Astrocyte of the cerebellum (primary cell): ENCODE measurements at regions of chr5 and their contacts with region 1.

Region 1: DNA sequence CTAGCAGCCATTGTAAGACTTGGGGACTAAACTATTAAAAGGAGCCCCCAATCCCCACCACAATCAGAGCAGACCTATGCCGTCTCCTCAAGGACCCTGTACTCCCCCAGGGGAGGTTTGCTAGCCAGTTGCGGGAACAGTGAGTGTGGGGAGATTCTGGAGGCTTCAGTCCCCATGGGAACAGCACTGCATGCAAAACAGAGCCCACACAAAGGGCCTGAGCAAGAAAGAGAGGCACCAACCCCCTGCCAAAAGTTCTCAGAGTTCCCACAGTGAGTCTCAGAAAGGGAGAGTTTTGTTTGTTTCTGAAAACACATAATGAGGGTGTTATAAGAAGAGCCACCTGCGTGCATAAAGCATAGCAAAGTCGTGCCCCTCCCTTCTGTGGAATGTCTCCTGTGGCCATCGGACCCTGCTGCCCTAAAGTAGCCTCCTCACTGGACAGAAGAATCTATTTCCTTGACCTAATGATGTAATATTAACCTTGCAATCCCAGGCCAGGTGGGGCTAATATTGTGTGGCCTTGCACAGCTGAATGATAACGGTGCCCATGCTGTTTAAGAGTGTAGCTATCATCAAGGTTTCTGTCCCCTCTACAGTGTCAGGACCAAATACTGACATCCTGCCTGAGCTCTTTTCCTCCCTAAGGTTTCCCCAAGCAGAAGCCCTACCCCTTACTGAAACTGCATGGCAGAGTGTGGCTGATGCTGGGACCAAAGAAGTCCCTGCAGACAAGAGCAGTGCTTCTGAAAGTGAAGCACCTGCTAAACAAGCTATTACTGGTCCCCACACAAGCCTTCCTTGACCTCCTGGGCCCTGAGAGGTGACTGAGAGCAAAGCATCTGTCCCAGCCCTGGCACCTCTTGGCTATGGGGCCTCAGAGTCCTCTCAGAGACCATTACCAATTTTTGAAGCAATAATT is 56.4 kb downstream of the CFAP90 start:
- DNase-seq: no peak
- H3K4me3 ChIP-seq: no peak overlapping the region
- CTCF ChIP-seq: no peak

Region 2: GRCh38 chr5:7261049-7261448 is 533.5 kb before region 1 on chr5:
- in situ Hi-C with region 1: loop called (anchors 25 kb)
- DNase-seq: peak; percentile 57
- H3K4me3 ChIP-seq: no peak overlapping the region
- CTCF ChIP-seq: peak; percentile 67

Region 3: GRCh38 chr5:7690557-7690956 is 104.0 kb before region 1 on chr5:
- in situ Hi-C with region 1: no loop called
- DNase-seq: no peak
- H3K4me3 ChIP-seq: no peak overlapping the region
- CTCF ChIP-seq: no peak

Region 4: DNA sequence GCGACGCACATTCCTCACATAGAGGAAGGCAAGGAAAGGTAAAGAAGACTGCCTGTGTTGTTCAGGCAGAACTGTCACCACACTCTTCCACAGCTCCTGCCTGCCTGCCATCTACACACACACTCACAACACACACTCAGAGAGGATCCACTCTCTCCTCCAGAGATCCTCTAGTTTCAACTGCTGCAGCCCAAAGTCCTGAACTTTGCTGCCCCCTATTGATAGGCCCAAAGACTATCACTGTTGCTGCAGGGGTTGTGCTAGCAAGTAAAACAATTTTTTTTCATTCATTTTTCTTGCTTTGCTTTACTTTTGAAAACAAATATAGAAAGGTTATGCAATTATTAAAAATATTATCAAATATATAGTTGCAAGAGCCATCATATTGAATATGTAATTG is 62.3 kb after region 1 on chr5:
- in situ Hi-C with region 1: no loop called
- DNase-seq: no peak
- H3K4me3 ChIP-seq: no peak overlapping the region
- CTCF ChIP-seq: peak; percentile 70